ENCODE measurements at regions of chr6 and their contacts with region 1.

Region 1: DNA sequence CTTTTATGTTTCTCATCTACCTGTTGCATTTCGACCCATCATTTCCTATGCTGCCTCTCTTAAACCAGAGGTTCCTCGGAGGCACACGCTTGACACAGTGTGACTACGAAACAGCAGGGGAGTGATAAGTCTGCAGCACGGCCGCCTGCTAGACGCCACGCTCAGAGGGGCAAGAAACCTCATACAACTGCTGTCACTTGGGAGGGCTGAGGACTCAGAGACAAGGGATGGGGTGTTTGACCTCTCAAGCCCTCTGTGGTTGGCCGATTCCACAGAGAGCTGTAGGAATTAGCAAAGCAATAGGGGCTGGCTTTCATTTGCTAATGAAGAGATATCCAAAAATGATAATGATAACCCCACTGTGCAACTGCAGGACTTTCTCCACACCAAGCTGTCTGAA is 372.5 kb downstream of the ZFAND3 start:
- DNase-seq: no peak
- ATAC-seq: no peak
- H3K4me3 ChIP-seq: no peak overlapping the region
- H3K27ac ChIP-seq: no peak overlapping the region
- H3K4me1 ChIP-seq: no peaks in the 10 kb centered on the region
- H3K27me3 ChIP-seq: no peaks in the 10 kb centered on the region
- CTCF ChIP-seq: no peak
- POLR2A ChIP-seq: no peak
- RAD21 ChIP-seq: no peak

Region 2: DNA sequence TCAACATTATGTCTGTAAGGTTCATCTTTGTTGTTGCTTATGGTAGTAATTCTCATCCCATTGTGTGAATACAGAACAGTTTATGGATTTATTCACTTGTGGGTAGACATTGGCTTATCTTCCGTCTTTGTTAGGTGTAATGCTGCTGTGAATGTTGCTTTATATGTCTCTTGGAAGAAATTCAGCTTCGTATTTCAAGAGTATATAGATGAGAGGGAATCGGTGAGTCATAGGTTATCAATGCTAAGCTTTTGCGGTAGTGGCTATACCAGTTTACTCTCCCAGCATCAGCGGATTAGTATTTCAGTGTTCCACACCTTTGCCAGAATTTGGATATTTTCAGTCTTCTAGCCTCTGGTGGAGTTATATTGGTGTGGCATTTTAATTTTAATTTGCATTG is 294.7 kb before region 1 on chr6:
- CTCF ChIA-PET with region 1: no interaction called
- POLR2A ChIA-PET with region 1: interaction called, 21 read pairs
- dilution Hi-C with region 1: no loop called
- in situ Hi-C with region 1: no loop called
- intact Hi-C with region 1: no loop called
- DNase-seq: peak; percentile 60
- ATAC-seq: no peak
- H3K4me3 ChIP-seq: no peak overlapping the region
- H3K27ac ChIP-seq: no peak overlapping the region
- H3K4me1 ChIP-seq: no peaks in the 10 kb centered on the region
- H3K27me3 ChIP-seq: no peaks in the 10 kb centered on the region
- CTCF ChIP-seq: no peak
- POLR2A ChIP-seq: no peak
- RAD21 ChIP-seq: no peak

Region 3: DNA sequence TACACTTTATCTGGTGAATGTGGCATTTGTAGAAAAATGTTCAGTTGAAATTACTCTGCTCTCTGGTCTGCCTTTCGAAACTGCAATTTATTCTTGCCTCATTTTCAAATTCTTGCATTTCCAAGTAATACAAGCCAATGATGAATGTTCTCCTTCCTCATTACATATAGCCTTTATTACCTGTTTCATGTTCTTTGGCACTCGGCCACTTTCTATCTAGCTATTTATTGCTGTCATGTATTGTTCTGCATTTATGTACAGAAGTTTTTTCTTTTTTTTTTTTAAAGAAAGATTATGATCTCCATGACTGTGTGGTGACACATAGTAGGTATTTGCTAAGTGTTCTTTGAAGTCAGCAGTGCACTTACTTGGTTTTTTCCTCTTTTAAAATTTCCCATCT is 111.1 kb before region 1 on chr6:
- CTCF ChIA-PET with region 1: interaction called, 12 read pairs
- POLR2A ChIA-PET with region 1: no interaction called
- dilution Hi-C with region 1: no loop called
- in situ Hi-C with region 1: no loop called
- intact Hi-C with region 1: no loop called
- DNase-seq: no peak
- ATAC-seq: peak; percentile 30; the same call in 1 of the 2 replicates
- H3K4me3 ChIP-seq: no peak overlapping the region
- H3K27ac ChIP-seq: peak overlapping the region; percentile 8; the same call in 1 of the 2 replicates
- H3K4me1 ChIP-seq: peaks cover 5% of the 10 kb centered on the region
- H3K27me3 ChIP-seq: no peaks in the 10 kb centered on the region
- CTCF ChIP-seq: no peak
- POLR2A ChIP-seq: no peak
- RAD21 ChIP-seq: no peak

Region 4: DNA sequence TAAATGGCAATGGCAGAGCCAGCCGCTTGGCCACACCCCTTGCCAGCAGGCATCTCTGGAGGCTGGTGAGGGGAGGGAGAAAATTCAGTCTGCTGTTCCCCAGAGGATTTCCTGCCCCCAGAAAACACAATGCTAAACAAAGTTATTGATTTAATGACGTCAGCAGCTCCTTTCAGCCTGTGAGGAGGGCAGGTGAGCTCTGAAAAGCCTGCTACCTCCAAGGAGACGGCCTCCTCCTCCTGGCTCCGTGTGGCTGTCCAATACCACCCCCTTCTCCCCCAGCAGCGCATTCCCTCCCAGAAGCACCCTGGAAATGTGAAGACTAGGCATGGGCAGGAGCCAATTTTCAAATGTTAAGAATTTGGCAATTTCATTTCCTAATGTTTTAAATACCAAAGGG is 20.6 kb after region 1 on chr6:
- CTCF ChIA-PET with region 1: no interaction called
- POLR2A ChIA-PET with region 1: no interaction called
- dilution Hi-C with region 1: no loop called
- in situ Hi-C with region 1: no loop called
- intact Hi-C with region 1: no loop called
- DNase-seq: no peak
- ATAC-seq: peak; percentile 29
- H3K4me3 ChIP-seq: no peak overlapping the region
- H3K27ac ChIP-seq: no peak overlapping the region
- H3K4me1 ChIP-seq: peaks cover 5% of the 10 kb centered on the region
- H3K27me3 ChIP-seq: no peaks in the 10 kb centered on the region
- CTCF ChIP-seq: no peak
- POLR2A ChIP-seq: no peak
- RAD21 ChIP-seq: no peak

Measured in IMR-90 (cell line).